Activated T-helper 1 cell treated with anti-CD3 and anti-CD28 coated beads, Interleukin-12 subunit alpha, Interleukin-12 subunit beta, Interleukin-2, Interleukin-4 antibody, amounts not matched to agents 30 ng/mL and 10 ng/mL and 1 ng/mL, durations not matched to agents 14 hours and 24 hours and 36 hours (primary cell): ENCODE measurements at regions of chr7 and their contacts with region 1.

Region 1: DNA sequence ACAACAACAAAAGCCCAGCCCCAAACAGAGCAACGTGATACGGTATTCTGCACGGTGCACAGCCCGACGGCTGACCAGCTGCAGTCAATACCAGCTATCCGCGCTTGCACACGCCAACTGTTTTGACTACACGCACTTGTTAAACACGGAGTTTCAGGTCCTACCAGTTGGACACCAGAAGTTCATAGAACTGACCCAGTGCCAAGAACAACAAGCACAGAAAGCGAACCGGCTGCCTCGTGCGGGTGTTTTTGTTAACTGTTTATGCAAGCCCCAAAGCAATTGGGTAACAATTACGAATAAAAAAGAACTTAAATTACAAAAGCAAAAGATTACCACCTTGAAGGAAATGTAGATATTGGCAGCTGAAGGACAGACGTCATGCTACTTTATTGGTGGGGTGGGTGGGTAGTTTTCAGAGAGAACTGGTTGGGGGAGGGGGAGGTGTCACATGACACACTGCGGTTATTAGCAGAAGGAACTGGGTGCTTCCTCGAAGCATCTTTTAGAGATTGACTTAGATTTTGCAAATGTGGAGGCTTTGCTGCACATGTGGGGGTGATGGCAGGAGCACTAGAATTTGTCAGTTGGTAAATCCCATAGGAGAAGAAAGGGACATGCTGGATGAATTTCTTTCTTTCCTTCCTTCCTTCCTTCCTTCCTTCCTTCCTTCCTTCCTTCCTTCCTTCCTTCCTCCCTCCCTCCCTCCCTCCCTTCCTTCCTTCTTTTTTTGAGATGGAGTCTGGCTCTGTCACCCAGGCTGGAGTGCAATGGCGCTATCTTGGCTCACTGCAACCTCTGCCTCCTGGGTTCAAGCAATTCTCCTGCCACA is 110.7 kb upstream of the EFCAB10 start:
- DNase-seq: no peak
- H3K4me3 Mint-ChIP-seq: peak overlapping the region; percentile 89
- H3K27ac Mint-ChIP-seq: peak overlapping the region; percentile 89
- H3K4me1 Mint-ChIP-seq: peaks cover 35% of the 10 kb centered on the region
- H3K27me3 Mint-ChIP-seq: no peaks in the 10 kb centered on the region

Region 2: DNA sequence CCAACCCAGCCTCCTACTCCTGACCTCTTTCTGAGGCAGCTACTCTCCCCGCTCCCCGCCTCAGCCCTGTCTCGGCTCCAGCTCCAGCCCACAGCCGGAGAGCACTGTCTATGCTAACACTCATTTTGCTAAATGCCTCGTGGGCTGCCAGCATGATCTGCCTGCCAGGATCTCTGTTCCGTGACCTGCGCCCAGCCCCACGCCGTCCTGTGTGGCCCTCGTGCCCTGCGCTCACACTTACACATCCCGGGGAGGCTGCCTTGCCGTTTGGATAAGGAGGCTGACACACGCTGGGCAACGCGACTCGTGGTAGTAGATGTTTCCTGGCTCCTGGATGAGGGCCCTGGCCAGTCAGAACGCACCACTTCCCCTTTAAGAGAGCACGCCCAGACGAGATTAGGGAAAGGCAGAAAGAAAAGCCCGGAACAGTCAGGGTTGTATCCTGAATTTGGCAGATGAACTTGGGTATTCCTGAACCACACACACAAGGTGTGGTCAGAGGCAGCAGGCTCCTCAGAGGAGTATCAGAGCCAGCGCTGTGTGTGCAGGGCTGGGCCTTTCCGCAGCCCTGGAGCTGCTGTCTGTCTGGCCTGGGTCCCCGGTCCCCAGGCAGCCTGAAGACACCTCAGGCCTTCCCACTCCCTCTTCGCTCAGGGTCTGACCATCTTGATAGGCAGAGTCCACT is 13.0 kb before region 1 on chr7:
- intact Hi-C with region 1: loop called (anchors 1 kb)
- DNase-seq: no peak
- H3K4me3 Mint-ChIP-seq: peak overlapping the region; percentile 89
- H3K27ac Mint-ChIP-seq: peak overlapping the region; percentile 93
- H3K4me1 Mint-ChIP-seq: peaks cover 57% of the 10 kb centered on the region
- H3K27me3 Mint-ChIP-seq: peaks cover 1% of the 10 kb centered on the region

Region 3: GRCh38 chr7:105800442-105800841 is 108.5 kb after region 1 on chr7:
- intact Hi-C with region 1: loop called (anchors 2 kb)
- DNase-seq: no peak
- H3K4me3 Mint-ChIP-seq: peak overlapping the region; percentile 62
- H3K27ac Mint-ChIP-seq: peak overlapping the region; percentile 15
- H3K4me1 Mint-ChIP-seq: peaks cover 44% of the 10 kb centered on the region
- H3K27me3 Mint-ChIP-seq: peaks cover 5% of the 10 kb centered on the region